MCF 10A (cell line): ENCODE measurements at regions of chr15 and their contacts with region 1.

Region 1: DNA sequence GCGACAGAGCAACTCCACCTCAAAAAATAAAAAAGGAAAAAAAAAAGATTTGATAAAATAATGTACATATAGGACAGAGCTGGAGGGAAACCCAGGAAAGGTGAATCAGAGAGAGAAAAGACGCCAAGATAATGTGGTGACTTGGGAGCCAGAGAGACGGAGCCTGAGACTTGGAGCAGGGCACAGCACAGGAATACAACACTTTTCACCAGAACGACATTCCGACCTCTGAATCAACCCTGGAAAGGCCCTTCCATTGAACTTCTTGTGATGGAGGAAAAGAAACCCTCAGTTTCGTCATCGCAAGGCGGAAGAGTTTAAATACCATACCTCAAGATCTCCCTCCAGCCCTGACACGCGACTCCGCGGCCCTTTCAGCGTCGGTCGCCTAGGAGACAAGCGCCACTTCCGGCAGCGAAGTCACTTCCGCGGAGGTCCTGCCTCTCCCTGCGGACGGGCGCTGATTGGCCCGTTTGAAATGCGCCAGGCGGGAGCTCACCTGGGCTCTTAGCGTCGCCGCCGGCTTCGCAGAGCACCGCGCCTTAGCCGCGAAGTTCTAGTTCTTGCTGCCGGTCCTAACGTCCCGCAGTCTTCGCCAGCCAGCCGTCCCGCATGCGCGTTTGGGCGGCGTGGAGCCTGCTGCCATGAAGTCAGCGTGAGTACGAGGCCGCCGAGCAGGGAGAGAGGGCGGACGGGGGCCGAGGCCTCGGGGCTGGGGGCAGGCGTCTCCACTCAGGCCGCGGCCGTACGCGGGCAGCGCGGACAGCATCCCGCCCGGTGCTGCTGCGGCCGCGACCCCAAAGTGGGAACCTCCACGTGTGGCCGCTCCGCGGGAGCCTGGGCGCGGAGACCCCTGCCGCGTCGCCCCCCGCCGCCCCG is at the start of gene KIF23:
- DNase-seq: peak; percentile 95
- H3K4me3 Mint-ChIP-seq: peak within 1 kb of the TSS; percentile 80
- H3K27ac Mint-ChIP-seq: peak within 1 kb of the TSS; percentile 88
- H3K4me1 Mint-ChIP-seq: peaks cover 13% of the 10 kb centered on the region
- H3K27me3 Mint-ChIP-seq: no peaks in the 10 kb centered on the region
- CTCF ChIP-seq: no peak
- total RNA-seq, gene KIF23: 30.3 and 50.2 TPM in 2 replicates

Region 2: GRCh38 chr15:69058830-69059556 is 355.1 kb before region 1 on chr15:
- CTCF ChIA-PET with region 1: interaction called, 13 read pairs
- POLR2A ChIA-PET with region 1: no interaction called
- intact Hi-C with region 1: loop called (anchors 1 kb)
- DNase-seq: peak; percentile 92
- H3K4me3 Mint-ChIP-seq: no peak overlapping the region
- H3K27ac Mint-ChIP-seq: no peak overlapping the region
- H3K4me1 Mint-ChIP-seq: no peaks in the 10 kb centered on the region
- H3K27me3 Mint-ChIP-seq: no peaks in the 10 kb centered on the region
- CTCF ChIP-seq: peak; percentile 89

Region 3: DNA sequence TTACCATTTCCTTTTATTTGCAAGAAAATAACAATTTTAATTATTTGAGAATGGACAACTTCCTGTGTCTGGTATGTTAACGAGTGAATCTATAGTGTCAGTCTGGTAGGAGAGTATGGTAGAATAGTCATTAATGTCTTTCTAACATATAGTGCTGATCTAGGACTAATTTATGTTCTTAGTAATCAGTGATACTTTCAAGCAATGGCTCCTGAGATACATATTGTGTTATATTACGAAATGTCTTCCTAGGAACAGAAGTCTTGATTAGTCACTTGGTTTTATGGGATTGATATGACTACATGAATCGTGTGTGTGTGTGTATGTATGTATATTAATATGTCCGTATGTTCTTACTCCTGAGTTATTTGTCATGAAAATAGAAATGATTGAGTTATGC is 181.9 kb before region 1 on chr15:
- CTCF ChIA-PET with region 1: no interaction called
- POLR2A ChIA-PET with region 1: no interaction called
- intact Hi-C with region 1: loop called (anchors 5 kb)
- DNase-seq: peak; percentile 61
- H3K4me3 Mint-ChIP-seq: no peak overlapping the region
- H3K27ac Mint-ChIP-seq: no peak overlapping the region
- H3K4me1 Mint-ChIP-seq: peaks cover 21% of the 10 kb centered on the region
- H3K27me3 Mint-ChIP-seq: no peaks in the 10 kb centered on the region
- CTCF ChIP-seq: no peak

Region 4: DNA sequence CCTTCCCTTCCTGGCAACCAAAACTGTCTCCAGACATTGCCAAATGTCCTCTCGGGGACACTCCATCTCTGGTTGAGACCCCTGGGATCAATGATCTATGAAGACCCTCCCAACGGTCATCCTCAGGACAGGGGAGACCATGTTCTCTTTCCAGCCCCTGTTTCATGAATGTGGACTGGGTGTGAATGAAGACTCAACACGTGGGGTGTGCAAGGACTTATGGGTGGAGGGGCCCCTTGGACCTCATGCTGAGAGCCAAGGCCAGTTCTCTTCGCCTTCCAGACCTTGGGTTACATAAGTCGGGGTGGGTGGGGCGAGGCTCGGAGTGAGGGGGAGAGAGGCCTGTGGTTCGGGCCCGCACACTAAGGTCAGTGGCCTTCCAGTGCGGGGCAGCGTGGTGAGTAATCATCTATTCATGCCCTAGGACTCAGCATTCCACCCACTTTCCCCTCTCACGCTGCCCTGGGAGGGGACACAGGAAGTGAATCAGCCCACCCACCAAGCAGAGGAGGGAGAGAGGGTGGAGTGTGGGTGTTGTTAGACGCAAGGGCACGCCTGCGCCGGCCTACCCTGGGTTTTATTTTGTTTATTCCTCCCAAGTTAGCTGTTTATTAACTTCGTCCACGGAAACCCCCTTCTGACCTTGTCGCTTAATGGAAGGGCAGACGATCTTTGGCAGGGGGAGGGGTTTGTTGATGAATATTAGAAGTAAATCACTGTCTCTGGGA is 108.7 kb before region 1 on chr15:
- CTCF ChIA-PET with region 1: interaction called, 4 read pairs
- POLR2A ChIA-PET with region 1: interaction called, 3 read pairs
- intact Hi-C with region 1: loop called (anchors 2 kb)
- DNase-seq: peak; percentile 98
- H3K4me3 Mint-ChIP-seq: peak overlapping the region; percentile 35
- H3K27ac Mint-ChIP-seq: peak overlapping the region; percentile 96
- H3K4me1 Mint-ChIP-seq: peaks cover 46% of the 10 kb centered on the region
- H3K27me3 Mint-ChIP-seq: no peaks in the 10 kb centered on the region
- CTCF ChIP-seq: no peak

Region 5: GRCh38 chr15:69452692-69453521 is 38.8 kb after region 1 on chr15 and contains the start of gene RPLP1:
- CTCF ChIA-PET with region 1: no interaction called
- POLR2A ChIA-PET with region 1: interaction called, 132 read pairs
- intact Hi-C with region 1: loop called (anchors 2 kb)
- DNase-seq: peak; percentile 95
- H3K4me3 Mint-ChIP-seq: peak within 1 kb of the TSS; percentile 95
- H3K27ac Mint-ChIP-seq: peak within 1 kb of the TSS; percentile 95
- H3K4me1 Mint-ChIP-seq: peaks cover 8% of the 10 kb centered on the region
- H3K27me3 Mint-ChIP-seq: no peaks in the 10 kb centered on the region
- CTCF ChIP-seq: no peak
- total RNA-seq, gene RPLP1: 2,295 and 2,621 TPM in 2 replicates